A673 (cell line): ENCODE measurements at regions of chr7 and their contacts with region 1.

Region 1: DNA sequence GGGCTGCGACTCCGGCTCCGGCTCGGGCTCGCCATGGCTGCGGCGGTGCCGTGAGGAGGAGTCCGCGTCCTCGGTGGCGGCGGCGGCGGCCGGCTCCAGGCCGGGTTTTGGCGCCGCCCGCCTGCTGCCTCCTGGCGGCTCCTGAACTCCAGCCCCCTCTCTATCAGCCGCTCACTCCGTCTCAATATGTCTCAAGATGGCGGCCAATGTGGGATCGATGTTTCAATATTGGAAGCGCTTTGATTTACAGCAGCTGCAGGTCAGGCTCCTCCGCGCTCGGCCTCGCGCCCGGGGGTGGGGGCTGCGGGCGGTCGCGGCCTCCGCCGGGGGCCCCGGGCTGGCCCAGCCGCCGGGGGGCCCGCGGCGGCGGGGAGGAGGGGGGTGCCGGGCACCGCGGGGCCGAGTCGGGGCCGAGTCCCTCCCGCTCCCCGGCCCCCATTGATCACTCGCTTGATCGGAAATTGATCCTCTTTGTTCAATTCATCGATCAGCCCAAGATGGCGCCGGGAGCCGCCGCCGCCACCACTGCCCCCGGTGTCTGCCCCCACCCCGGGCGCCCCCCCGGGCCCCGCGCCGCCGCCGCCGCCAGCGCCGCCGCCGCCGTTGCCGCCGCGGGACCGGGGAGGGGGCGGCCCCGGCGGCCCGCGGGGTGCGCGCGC is 1.5 kb upstream of the CUX1 start:
- DNase-seq: peak; percentile 90
- H3K4me3 ChIP-seq: peak overlapping the region; percentile 66
- H3K27ac ChIP-seq: peak overlapping the region; percentile 65
- H3K4me1 ChIP-seq: peaks cover 49% of the 10 kb centered on the region
- H3K27me3 ChIP-seq: no peaks in the 10 kb centered on the region
- CTCF ChIP-seq: no peak

Region 2: GRCh38 chr7:101542527-101543241 is 273.3 kb before region 1 on chr7:
- CTCF ChIA-PET with region 1: no interaction called
- POLR2A ChIA-PET with region 1: no interaction called
- intact Hi-C with region 1: loop called (anchors 10 kb)
- DNase-seq: peak; percentile 62
- H3K4me3 ChIP-seq: no peak overlapping the region
- H3K27ac ChIP-seq: no peak overlapping the region
- H3K4me1 ChIP-seq: no peaks in the 10 kb centered on the region
- H3K27me3 ChIP-seq: no peaks in the 10 kb centered on the region
- CTCF ChIP-seq: peak; percentile 91

Region 3: DNA sequence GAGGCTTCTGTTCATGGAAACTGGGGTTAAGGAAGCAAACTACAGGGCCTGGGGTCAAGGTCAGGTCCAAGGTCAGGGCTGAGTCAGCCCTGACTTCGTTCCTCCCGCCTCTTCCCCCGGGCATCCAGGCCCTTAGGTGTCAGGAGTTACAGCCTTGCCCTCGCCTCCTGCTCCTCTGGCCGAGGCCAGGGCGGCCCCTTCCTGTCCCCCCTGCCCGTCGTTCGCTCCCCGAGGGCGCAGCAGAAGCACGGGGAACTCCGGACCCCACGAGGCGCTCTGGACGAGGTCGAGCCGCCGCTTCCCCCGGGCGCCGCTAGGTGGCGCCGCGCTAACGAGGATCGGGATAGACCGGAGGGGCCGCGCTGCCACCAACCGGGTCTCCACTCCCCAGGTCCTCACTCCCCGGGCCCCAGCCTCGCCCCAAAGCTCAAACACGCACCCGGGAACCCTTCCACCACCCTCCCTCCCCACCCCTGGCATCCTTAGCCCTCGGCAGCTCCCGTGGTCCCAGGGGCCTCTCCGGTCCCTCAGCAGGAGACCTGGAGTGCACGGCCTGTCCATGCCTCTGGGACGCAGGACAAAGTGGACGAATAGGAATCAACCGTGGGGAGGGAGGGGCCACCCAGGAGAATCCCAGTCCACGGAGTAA is 127.7 kb before region 1 on chr7:
- CTCF ChIA-PET with region 1: no interaction called
- POLR2A ChIA-PET with region 1: no interaction called
- intact Hi-C with region 1: loop called (anchors 5 kb)
- DNase-seq: peak; percentile 81
- H3K4me3 ChIP-seq: peak overlapping the region; percentile 17
- H3K27ac ChIP-seq: no peak overlapping the region
- H3K4me1 ChIP-seq: no peaks in the 10 kb centered on the region
- H3K27me3 ChIP-seq: no peaks in the 10 kb centered on the region
- CTCF ChIP-seq: peak; percentile 96

Region 4: GRCh38 chr7:101743241-101743994 is 72.5 kb before region 1 on chr7:
- CTCF ChIA-PET with region 1: no interaction called
- POLR2A ChIA-PET with region 1: no interaction called
- intact Hi-C with region 1: loop called (anchors 2 kb)
- DNase-seq: peak; percentile 71
- H3K4me3 ChIP-seq: peak overlapping the region; percentile 52
- H3K27ac ChIP-seq: no peak overlapping the region
- H3K4me1 ChIP-seq: peaks cover 6% of the 10 kb centered on the region
- H3K27me3 ChIP-seq: no peaks in the 10 kb centered on the region
- CTCF ChIP-seq: peak; percentile 60

Region 5: GRCh38 chr7:102236592-102237287 is 420.8 kb after region 1 on chr7:
- CTCF ChIA-PET with region 1: no interaction called
- POLR2A ChIA-PET with region 1: no interaction called
- intact Hi-C with region 1: loop called (anchors 5 kb)
- DNase-seq: peak; percentile 77
- H3K4me3 ChIP-seq: no peak overlapping the region
- H3K27ac ChIP-seq: no peak overlapping the region
- H3K4me1 ChIP-seq: no peaks in the 10 kb centered on the region
- H3K27me3 ChIP-seq: no peaks in the 10 kb centered on the region
- CTCF ChIP-seq: peak; percentile 91